ENCODE measurements at regions of chr1 and their contacts with region 1.

Region 1: GRCh38 chr1:10032590-10033358 is at the start of gene UBE4B:
- DNase-seq: peak; percentile 98
- ATAC-seq: peak; percentile 89
- H3K4me3 ChIP-seq: peak within 1 kb of the TSS; percentile 81
- H3K27ac ChIP-seq: peak within 1 kb of the TSS; percentile 84
- H3K4me1 ChIP-seq: peaks cover 13% of the 10 kb centered on the region
- H3K27me3 ChIP-seq: no peaks in the 10 kb centered on the region
- CTCF ChIP-seq: peak; percentile 83
- total RNA-seq, gene UBE4B: 37.9 and 42.1 TPM in 2 replicates

Region 2: GRCh38 chr1:9874959-9875635 is 157.7 kb before region 1 on chr1:
- CTCF ChIA-PET with region 1: no interaction called
- POLR2A ChIA-PET with region 1: interaction called, 3 read pairs
- intact Hi-C with region 1: loop called (anchors 5 kb)
- DNase-seq: peak; percentile 81
- ATAC-seq: peak; percentile 49
- H3K4me3 ChIP-seq: no peak overlapping the region
- H3K27ac ChIP-seq: no peak overlapping the region
- H3K4me1 ChIP-seq: peaks cover 30% of the 10 kb centered on the region
- H3K27me3 ChIP-seq: no peaks in the 10 kb centered on the region
- CTCF ChIP-seq: peak; percentile 95

Region 3: DNA sequence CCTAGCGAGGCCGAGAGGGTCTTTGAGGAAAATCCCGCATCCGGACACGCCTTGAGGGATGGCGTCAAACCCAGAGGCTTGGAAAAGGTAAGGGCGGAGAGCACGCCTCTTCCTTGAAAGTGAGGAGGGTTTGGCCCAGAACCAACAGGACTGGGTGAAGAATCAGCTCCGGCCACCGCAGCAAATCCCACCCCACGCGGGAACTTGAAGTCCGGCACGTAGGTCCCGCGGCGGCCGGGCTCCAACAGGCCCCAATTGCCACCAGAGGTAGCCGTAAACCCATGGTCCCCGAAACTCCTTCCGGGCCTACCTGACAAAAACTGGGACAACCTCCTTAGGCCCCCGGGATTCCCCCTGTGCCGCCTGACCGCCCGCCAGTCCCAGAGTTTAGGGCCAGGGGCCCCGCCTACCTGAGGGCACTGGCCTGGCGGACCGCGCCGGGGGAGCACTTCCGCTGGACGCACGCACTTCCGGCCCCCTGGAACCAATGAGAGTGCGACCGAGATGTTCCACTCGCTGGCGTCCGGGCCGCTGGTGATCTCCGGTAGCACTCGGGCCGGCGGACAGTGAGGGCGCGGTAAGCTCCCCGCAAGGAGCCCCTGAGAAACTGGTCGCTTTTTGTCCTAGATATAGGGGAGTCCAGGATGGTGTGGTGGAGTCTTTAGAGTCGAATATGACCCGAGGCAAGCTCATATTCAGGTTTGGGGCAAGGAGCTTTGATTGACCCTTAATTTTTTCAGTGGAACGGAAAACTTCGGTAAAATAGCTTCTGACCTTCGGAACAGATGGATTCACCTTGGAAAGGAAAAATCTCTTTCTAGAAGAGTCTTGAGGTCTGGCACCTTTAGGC is 89.6 kb before region 1 on chr1 and contains the starts of genes LZIC and NMNAT1:
- CTCF ChIA-PET with region 1: no interaction called
- POLR2A ChIA-PET with region 1: no interaction called
- intact Hi-C with region 1: loop called (anchors 2 kb)
- DNase-seq: peak; percentile 93
- ATAC-seq: peak; percentile 97
- H3K4me3 ChIP-seq: peak within 1 kb of the TSS; percentile 98
- H3K27ac ChIP-seq: peak within 1 kb of the TSS; percentile 93
- H3K4me1 ChIP-seq: peaks cover 10% of the 10 kb centered on the region; the same call in 1 of the 2 replicates
- H3K27me3 ChIP-seq: no peaks in the 10 kb centered on the region
- CTCF ChIP-seq: no peak
- total RNA-seq, gene LZIC: 27.2 and 32.5 TPM in 2 replicates
- total RNA-seq, gene NMNAT1: 4.6 and 7.3 TPM in 2 replicates

Region 4: GRCh38 chr1:9996624-9997582 is 35.9 kb before region 1 on chr1 and contains the start of gene RBP7:
- CTCF ChIA-PET with region 1: no interaction called
- POLR2A ChIA-PET with region 1: no interaction called
- intact Hi-C with region 1: loop called (anchors 5 kb)
- DNase-seq: peak; percentile 23
- ATAC-seq: peak; percentile 75
- H3K4me3 ChIP-seq: peak within 1 kb of the TSS; percentile 60
- H3K27ac ChIP-seq: no peak within 1 kb of the TSS
- H3K4me1 ChIP-seq: peaks cover 6% of the 10 kb centered on the region; the same call in 1 of the 2 replicates
- H3K27me3 ChIP-seq: no peaks in the 10 kb centered on the region
- CTCF ChIP-seq: no peak
- total RNA-seq, gene RBP7: 6.0 and 7.5 TPM in 2 replicates

Region 5: DNA sequence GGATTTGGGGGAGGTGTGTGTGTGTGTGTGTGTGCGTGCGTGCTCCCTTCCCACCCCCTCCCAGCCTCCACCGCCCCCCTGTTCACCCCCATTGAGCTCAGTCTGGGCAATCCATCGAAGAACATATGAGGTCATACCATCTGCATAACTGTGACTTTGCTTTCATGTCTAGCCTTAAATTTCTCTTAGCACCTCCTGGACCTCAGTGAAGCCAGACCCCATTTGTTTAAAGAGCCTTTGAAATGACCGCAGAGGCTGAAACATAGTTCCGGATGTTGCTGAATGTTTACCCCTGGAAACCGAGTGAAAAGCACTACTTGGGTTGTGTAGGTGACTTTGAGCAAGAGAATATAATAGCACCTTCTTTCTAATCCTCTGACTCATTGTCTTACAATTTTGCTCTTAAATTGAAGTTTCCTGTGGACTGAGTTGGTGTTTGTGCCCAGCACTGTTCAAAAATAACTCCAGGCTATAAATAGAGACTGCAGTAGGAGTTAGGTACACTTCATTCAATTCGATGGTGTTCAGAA is 75.4 kb after region 1 on chr1:
- CTCF ChIA-PET with region 1: interaction called, 4 read pairs
- POLR2A ChIA-PET with region 1: no interaction called
- intact Hi-C with region 1: loop called (anchors 1 kb)
- DNase-seq: peak; percentile 84
- ATAC-seq: peak; percentile 95
- H3K4me3 ChIP-seq: no peak overlapping the region
- H3K27ac ChIP-seq: peak overlapping the region; percentile 28
- H3K4me1 ChIP-seq: peaks cover 23% of the 10 kb centered on the region
- H3K27me3 ChIP-seq: no peaks in the 10 kb centered on the region
- CTCF ChIP-seq: no peak

Measured in PC-3 (cell line).